ENCODE measurements at regions of chr22 and their contacts with region 1.

Region 1: GRCh38 chr22:39090426-39091064 is 6.5 kb upstream of the APOBEC3H start:
- DNase-seq: peak; percentile 96
- H3K4me3 Mint-ChIP-seq: peak overlapping the region; percentile 73
- H3K27ac Mint-ChIP-seq: peak overlapping the region; percentile 96
- H3K4me1 Mint-ChIP-seq: peaks cover 100% of the 10 kb centered on the region
- H3K27me3 Mint-ChIP-seq: no peaks in the 10 kb centered on the region

Region 2: GRCh38 chr22:39080052-39080762 is 10.3 kb before region 1 on chr22:
- CTCF ChIA-PET with region 1: no interaction called
- POLR2A ChIA-PET with region 1: interaction called, 46 read pairs
- DNase-seq: no peak
- H3K4me3 Mint-ChIP-seq: peak overlapping the region; percentile 58
- H3K27ac Mint-ChIP-seq: peak overlapping the region; percentile 71
- H3K4me1 Mint-ChIP-seq: peaks cover 63% of the 10 kb centered on the region
- H3K27me3 Mint-ChIP-seq: no peaks in the 10 kb centered on the region

Region 3: GRCh38 chr22:39300186-39300830 is 209.8 kb after region 1 on chr22:
- CTCF ChIA-PET with region 1: no interaction called
- POLR2A ChIA-PET with region 1: no interaction called
- DNase-seq: no peak
- H3K4me3 Mint-ChIP-seq: no peak overlapping the region
- H3K27ac Mint-ChIP-seq: no peak overlapping the region
- H3K4me1 Mint-ChIP-seq: peaks cover 4% of the 10 kb centered on the region
- H3K27me3 Mint-ChIP-seq: peaks cover 26% of the 10 kb centered on the region

Measured in activated CD4-positive, alpha-beta memory T cell treated with anti-CD3 and anti-CD28 coated beads, Interleukin-2, amount 10 ng/mL, durations not matched to agents 7 days and 5 days (primary cell).